ENCODE measurements at regions of chr15 and their contacts with region 1.

Region 1: DNA sequence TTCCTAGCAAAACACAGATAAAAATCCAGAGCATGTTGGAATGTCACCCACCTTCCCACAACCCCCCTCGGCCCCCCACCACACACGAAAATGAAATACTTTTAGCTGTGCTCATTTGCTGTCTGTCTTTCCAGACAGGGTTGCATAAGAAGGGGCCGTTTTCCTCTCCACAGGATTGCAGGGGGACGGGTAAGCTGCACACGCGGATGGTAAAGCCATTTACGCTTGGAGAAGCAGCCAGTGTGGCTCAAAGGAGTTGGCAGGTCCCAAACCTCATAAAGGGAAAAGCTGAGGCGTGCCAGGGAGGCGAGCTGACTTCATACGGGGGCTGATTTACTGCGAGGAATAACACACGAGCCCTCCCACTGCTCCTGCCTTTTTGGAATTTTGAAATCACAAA is 47.4 kb upstream of the ITGA11 start:
- DNase-seq: peak; percentile 82 to 93
- H3K4me3 ChIP-seq: no peak overlapping the region
- H3K27ac ChIP-seq: peak overlapping the region; percentile 79 to 86
- H3K4me1 ChIP-seq: peaks cover 0 to 50% (median 24%) of the 10 kb centered on the region in 4 donors
- H3K27me3 ChIP-seq: no peaks in the 10 kb centered on the region
- CTCF ChIP-seq: no peak

Region 2: DNA sequence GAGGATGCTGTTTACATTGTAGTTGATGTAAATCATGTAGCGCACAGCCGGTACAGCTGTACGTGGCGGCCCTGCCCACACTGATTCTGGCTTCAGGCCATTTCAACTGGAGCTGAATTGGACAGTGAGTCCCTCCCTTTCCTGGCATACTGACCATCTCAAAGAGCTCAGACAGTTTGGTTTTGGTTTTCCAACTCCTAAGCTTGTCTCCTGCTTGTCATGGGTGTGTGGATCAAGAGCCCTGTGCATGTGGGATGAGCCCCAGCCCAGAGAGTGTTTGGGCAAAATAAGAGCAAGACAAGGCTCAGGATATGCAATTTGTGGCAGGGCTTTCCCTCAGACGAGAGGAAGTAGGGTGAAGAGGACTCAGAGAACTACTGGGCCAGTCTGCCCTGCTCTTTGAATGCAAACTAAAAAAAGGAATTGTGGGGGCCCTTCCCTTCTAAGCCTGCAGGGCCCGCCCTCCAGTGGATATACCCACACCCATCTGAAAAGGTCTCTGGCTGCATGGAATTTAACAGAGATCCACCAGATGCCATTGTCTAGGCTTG is 60.7 kb before region 1 on chr15:
- intact Hi-C with region 1: loop called (anchors 5 kb)
- DNase-seq: peak in 1 of 2 donors; percentile 70
- H3K4me3 ChIP-seq: no peak overlapping the region
- H3K27ac ChIP-seq: peak overlapping the region; percentile 46 to 51
- H3K4me1 ChIP-seq: peaks cover 0 to 75% (median 36%) of the 10 kb centered on the region in 4 donors
- H3K27me3 ChIP-seq: no peaks in the 10 kb centered on the region
- CTCF ChIP-seq: no peak

Region 3: GRCh38 chr15:68447209-68447608 is 32.2 kb before region 1 on chr15:
- intact Hi-C with region 1: no loop called
- DNase-seq: peak in 1 of 2 donors; percentile 48
- H3K4me3 ChIP-seq: no peak overlapping the region
- H3K27ac ChIP-seq: no peak overlapping the region
- H3K4me1 ChIP-seq: no peaks in the 10 kb centered on the region
- H3K27me3 ChIP-seq: peaks cover 0 to 5% of the 10 kb centered on the region in 2 donors
- CTCF ChIP-seq: no peak